ENCODE measurements at regions of chr1 and their contacts with region 1.

Region 1: GRCh38 chr1:179365320-179366092 is at the start of gene AXDND1:
- DNase-seq: peak; percentile 87
- CTCF ChIP-seq: no peak

Region 2: DNA sequence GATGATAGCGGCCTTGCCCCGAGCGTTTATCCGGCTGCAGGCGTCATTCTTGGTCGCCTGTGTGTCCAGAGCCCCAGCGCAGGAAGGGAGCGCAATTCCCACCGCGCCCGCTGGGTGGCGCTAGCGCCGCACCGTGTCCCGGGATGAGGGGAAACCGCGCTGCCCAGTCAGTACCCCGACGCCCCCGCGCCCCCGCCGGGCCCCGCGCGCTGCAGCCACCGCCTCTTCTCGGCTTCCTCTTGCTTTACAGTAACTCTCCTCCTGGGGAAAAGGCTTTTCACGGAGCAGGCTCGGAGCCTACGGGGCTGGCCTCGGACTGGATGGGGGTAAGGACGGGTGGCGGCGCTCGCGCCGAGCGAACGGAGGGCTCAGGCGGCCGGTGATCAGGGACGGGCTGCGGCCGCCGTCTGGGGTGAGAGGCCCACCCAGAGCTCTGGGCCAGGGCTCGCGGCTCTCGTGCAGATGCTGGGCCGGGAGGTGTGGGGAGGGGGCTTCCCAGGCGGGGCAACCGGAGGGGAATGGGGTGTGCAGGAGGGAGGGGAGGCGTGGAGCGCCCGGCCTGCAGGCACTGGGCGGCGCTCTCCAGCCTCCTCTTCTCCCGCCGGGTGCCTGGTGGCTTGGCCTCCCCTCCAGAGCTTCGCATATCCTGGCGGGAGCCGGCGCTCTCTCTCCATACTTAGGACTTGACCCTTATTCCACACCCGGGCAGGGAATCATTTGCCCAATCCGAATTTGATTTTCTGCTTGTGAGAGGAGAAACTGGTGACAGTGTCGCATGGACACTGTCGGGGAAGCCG is 822.7 kb before region 1 on chr1:
- in situ Hi-C with region 1: loop called (anchors 25 kb)
- DNase-seq: peak; percentile 92
- CTCF ChIP-seq: peak; percentile 97

Region 3: GRCh38 chr1:179081687-179082332 is 283.7 kb before region 1 on chr1 and contains the start of gene TOR3A:
- in situ Hi-C with region 1: loop called (anchors 10 kb)
- DNase-seq: peak; percentile 96
- CTCF ChIP-seq: no peak

Region 4: DNA sequence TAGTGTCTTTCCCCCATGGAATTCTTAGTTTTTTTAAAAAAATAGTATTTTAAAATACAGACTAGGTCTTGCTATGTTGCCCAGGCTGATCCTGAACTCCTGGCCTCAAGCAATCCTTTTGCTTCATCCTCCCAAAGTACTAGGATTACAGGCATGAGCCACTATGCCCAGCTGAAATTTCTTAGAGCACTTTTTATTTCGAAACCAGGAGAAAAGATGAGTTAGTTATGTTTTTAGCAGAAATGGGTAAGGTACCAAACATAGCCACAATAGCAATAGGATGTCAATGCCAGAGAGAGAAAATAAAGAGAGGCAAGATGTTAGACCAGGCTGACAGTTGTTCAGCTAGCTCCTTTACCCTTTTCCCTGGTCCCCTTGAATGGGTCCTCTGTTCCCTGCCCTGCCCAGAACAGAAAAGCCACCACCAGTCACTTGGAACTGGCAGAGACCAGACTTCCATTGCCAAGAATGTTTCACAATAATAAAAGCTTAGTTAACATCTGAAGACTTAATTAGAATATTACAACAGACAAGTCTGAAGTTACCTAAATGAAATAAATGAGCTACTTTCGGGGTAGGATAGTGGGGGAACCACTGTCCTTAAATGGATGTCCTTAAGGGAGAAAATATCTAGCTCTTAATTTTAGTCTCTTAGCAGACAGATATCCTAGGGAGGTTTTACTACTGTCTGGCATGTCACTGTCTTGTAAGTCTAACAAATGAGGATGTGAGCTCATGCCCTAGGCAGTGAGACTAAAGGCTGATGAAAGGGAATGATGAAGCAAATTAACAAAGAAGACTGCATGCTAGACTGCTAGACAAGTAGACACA is 190.3 kb before region 1 on chr1:
- in situ Hi-C with region 1: no loop called
- DNase-seq: no peak
- CTCF ChIP-seq: no peak